ENCODE measurements at regions of chr1 and their contacts with region 1.

Region 1: GRCh38 chr1:242467556-242468145 is 56.8 kb downstream of the PLD5 start:
- DNase-seq: peak; percentile 31 to 78
- H3K4me3 ChIP-seq: no peak overlapping the region
- H3K27ac ChIP-seq: no peak overlapping the region
- H3K4me1 ChIP-seq: no peaks in the 10 kb centered on the region
- H3K27me3 ChIP-seq: peaks cover 0 to 15% (median 0%) of the 10 kb centered on the region in 3 donors
- CTCF ChIP-seq: peak in 5 of 7 experiments; percentile 25 to 46 (median 33)
- EP300 ChIP-seq: no peak
- POLR2A ChIP-seq: no peak

Region 2: GRCh38 chr1:243325305-243325890 is 857.7 kb after region 1 on chr1:
- intact Hi-C with region 1: loop called (anchors 10 kb)
- DNase-seq: peak in 1 of 2 donors; percentile 79
- H3K4me3 ChIP-seq: no peak overlapping the region
- H3K27ac ChIP-seq: no peak overlapping the region
- H3K4me1 ChIP-seq: peaks cover 0 to 7% (median 0%) of the 10 kb centered on the region in 4 donors
- H3K27me3 ChIP-seq: no peaks in the 10 kb centered on the region
- CTCF ChIP-seq: peak in 4 of 7 experiments; percentile 62 to 83 (median 70)
- EP300 ChIP-seq: no peak
- POLR2A ChIP-seq: no peak